Colonic mucosa (tissue), 4 donors: ENCODE measurements at regions of chr3 and their contacts with region 1.

Region 1: GRCh38 chr3:128167973-128168674 is 14.8 kb downstream of the EEFSEC start:
- DNase-seq: no peak
- H3K4me3 ChIP-seq: no peak overlapping the region
- H3K27ac ChIP-seq: no peak overlapping the region
- H3K4me1 ChIP-seq: no peaks in the 10 kb centered on the region
- H3K27me3 ChIP-seq: no peaks in the 10 kb centered on the region
- CTCF ChIP-seq: no peak

Region 2: GRCh38 chr3:128416578-128417211 is 248.6 kb after region 1 on chr3:
- intact Hi-C with region 1: no loop called
- DNase-seq: no peak
- H3K4me3 ChIP-seq: no peak overlapping the region
- H3K27ac ChIP-seq: no peak overlapping the region
- H3K4me1 ChIP-seq: no peaks in the 10 kb centered on the region
- H3K27me3 ChIP-seq: no peaks in the 10 kb centered on the region
- CTCF ChIP-seq: no peak

Region 3: DNA sequence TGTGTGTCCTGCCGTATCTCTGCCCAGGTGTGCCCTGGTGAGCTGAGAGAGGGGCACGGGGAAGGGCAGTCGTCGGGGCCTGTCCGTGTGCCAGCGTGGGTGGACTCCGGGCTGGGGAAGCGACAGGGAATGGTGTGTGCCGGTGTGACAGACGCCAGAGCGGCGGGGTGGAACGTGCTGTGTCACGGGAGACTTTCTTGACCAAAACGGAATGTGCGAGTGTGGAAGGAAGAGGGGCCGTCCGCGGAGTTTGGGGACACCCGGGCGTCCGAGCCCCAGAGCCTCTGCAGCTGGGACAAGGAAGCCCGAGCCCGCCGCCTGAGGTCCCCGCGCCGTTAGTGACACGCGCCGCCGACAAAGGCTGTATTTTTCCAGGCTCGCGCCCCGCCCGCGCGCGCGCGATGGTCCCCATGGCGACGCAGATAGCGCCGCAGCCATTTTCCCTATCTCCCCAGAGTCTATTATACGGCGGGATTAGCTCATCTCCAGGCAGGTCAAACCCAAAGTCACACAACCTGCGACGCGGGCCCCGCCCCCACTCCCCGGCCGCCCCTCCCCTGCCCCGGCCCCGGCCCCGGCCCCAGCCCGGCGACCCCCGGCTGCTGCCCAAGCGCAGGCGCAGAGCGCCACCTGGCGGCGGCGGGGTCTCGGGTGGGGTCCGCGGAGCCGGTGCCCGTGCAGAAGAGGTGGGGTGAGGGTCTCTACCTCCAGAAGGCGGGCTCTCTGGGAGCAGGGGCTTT is 329.4 kb after region 1 on chr3:
- intact Hi-C with region 1: loop called (anchors 10 kb)
- DNase-seq: peak; percentile 73
- H3K4me3 ChIP-seq: peak overlapping the region; percentile 35
- H3K27ac ChIP-seq: no peak overlapping the region
- H3K4me1 ChIP-seq: peaks cover 13% of the 10 kb centered on the region
- H3K27me3 ChIP-seq: peaks cover 47% of the 10 kb centered on the region
- CTCF ChIP-seq: peak; percentile 55